Caco-2 (cell line): ENCODE measurements at regions of chr2 and their contacts with region 1.

Region 1: DNA sequence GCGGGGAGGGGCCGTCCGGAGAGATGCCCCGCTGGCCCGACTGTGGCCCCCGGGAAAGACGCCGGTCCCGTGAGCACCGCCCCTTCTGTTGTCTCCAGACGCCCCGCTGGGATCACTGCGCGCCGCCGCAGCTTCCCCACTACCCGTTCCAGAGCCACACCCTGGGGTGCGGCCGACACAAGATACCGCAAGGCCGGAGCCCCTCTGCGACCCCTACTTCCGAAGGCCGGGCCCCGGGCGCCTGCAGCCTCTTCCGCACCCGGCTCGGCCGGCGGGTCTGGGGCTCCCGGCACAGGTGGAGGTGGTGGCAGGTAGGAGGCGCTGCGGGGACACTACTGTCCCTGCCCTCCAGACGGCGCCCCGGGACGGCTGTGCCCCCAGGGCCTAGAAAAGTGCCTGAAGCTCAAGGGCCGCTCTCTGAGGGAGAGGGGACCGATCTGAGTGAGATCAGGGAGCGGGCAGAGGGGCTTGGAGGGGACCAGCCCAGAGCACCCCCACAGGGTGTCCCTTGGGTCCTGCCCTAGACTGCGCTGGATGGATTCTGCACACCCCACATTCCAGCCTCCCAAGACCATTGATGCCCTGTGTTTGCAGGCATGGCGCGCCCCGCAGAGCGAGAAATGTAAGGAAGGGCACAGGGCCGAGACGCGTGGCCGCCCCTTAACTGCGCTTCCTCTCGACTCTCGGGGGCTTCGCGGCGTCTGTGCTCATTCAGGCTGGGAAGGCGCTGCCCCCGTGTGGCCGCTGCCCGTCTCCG is 80.0 kb downstream of the GFPT1 start:
- DNase-seq: peak; percentile 62 to 70
- H3K4me3 ChIP-seq: peak overlapping the region; percentile 6
- H3K4me3 Mint-ChIP-seq: peak overlapping the region; percentile 62
- H3K27ac Mint-ChIP-seq: no peak overlapping the region
- H3K4me1 ChIP-seq: peaks cover 17% of the 10 kb centered on the region; the same call in 1 of the 2 replicates
- H3K4me1 Mint-ChIP-seq: peaks cover 12% of the 10 kb centered on the region
- H3K27me3 ChIP-seq: no peaks in the 10 kb centered on the region
- H3K27me3 Mint-ChIP-seq: peaks cover 10% of the 10 kb centered on the region
- CTCF ChIP-seq: peak; percentile 70 to 82

Region 2: DNA sequence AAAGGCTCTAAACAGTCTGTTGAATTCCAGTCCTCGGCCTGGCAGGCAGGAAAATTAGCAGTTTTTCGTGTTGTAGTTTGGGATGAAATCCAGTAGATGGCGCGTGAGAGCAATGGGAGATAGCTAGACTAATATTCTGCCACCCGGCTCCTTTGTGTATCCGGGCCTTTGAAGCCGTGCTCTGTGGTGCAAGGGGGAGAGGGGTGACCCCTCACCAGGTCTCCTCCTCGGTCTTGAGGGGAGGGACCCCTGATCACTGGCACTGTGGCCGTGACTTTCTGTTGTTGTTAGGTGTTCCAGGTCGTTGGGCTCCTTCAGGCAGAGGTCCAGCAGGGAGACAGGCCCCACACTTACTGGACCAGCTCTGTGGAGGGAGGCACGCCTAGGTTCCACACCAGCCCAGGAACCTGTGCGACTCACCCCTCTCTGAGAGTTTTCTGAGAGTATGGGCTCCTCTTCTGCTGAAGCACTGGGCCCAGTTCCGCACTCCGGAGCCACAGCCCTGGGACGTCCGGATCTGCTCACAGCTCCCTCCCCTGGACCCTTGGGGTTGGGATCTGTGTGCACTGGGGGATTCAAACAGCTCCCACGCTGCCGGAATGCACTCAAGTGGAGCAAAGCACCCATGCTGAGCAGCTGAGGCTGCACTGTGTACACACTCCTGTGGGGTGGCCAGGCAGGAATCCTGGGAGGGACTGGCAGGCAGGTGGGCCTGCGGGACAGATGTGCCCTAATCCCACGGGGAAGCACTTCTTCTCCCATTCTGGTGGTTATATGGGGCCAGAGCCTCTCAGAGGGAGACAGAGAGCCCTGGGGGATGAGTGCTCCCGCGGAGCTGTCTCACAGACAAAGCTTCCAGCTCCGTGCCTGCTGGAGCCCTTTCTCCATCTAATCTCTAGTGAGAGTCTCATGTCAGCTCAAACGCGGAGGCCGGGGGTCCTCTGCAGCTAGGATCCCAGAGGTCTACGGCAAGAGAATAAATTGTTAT is 363.1 kb before region 1 on chr2:
- CTCF ChIA-PET with region 1: no interaction called
- POLR2A ChIA-PET with region 1: no interaction called
- intact Hi-C with region 1: loop called (anchors 5 kb)
- DNase-seq: peak; percentile 50 to 76
- H3K4me3 ChIP-seq: no peak overlapping the region
- H3K4me3 Mint-ChIP-seq: no peak overlapping the region
- H3K27ac Mint-ChIP-seq: no peak overlapping the region
- H3K4me1 ChIP-seq: no peaks in the 10 kb centered on the region
- H3K4me1 Mint-ChIP-seq: no peaks in the 10 kb centered on the region
- H3K27me3 ChIP-seq: no peaks in the 10 kb centered on the region
- H3K27me3 Mint-ChIP-seq: peaks cover 22% of the 10 kb centered on the region
- CTCF ChIP-seq: peak; percentile 81 to 84

Region 3: GRCh38 chr2:69026026-69026425 is 281.0 kb before region 1 on chr2:
- CTCF ChIA-PET with region 1: interaction called, 3 read pairs
- POLR2A ChIA-PET with region 1: no interaction called
- intact Hi-C with region 1: loop called (anchors 1 kb)
- DNase-seq: peak in 1 of 2 experiments; percentile 69
- H3K4me3 ChIP-seq: no peak overlapping the region
- H3K4me3 Mint-ChIP-seq: no peak overlapping the region
- H3K27ac Mint-ChIP-seq: no peak overlapping the region
- H3K4me1 ChIP-seq: no peaks in the 10 kb centered on the region
- H3K4me1 Mint-ChIP-seq: no peaks in the 10 kb centered on the region
- H3K27me3 ChIP-seq: no peaks in the 10 kb centered on the region
- H3K27me3 Mint-ChIP-seq: no peaks in the 10 kb centered on the region
- CTCF ChIP-seq: peak; percentile 58 to 62

Region 4: GRCh38 chr2:69159988-69160387 is 147.0 kb before region 1 on chr2:
- CTCF ChIA-PET with region 1: no interaction called
- POLR2A ChIA-PET with region 1: no interaction called
- intact Hi-C with region 1: loop called (anchors 1 kb)
- DNase-seq: peak; percentile 45 to 69
- H3K4me3 ChIP-seq: no peak overlapping the region
- H3K4me3 Mint-ChIP-seq: no peak overlapping the region
- H3K27ac Mint-ChIP-seq: no peak overlapping the region
- H3K4me1 ChIP-seq: peaks cover 11% of the 10 kb centered on the region; the same call in 1 of the 2 replicates
- H3K4me1 Mint-ChIP-seq: peaks cover 6% of the 10 kb centered on the region
- H3K27me3 ChIP-seq: peaks cover 1% of the 10 kb centered on the region; the same call in 1 of the 2 replicates
- H3K27me3 Mint-ChIP-seq: no peaks in the 10 kb centered on the region
- CTCF ChIP-seq: peak; percentile 39 to 59